Tibial artery (tissue), 4 donors: ENCODE measurements at regions of chr13 and their contacts with region 1.

Region 1: DNA sequence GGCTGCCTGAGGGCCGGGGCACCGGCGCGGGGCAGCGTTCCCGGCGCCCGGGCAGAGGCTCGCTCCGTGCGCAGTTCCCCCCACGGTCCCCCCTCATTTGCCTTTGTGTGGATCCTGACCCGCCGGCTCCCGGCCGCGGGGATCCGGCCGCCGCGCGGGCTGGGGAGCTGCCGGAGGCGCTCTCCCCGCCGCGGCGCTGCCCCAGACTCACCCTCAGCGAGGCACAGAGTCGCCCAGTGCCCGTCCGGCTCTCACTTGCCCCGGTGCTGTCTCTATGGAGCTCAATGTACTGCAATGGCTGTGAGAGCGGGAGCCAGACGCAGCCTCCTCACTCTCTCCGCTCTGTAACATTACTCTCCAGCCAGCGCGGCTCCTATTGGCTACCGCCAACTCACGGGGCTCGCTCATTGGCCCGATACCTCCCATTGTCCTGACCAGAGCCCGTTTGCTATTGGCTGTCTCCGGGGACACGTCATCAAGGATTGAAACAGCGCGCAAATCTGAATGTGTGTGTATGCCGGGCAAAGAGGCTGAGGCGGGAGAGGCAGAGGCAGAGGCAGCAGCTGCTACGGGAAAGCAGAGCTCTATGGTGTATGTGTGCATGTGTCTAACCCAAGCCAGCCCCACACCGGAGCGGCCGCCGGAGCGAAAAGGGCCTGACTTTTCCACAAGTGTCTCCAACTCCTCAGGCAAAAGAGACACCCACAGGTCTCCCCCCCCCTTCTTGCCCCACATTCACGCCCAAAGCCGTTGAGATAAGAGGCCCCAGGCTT is at the start of gene HMGB1:
- DNase-seq: peak; percentile 99
- H3K4me3 ChIP-seq: peak within 1 kb of the TSS; percentile 66 to 100
- H3K27ac ChIP-seq: peak within 1 kb of the TSS; percentile 96 to 100
- H3K4me1 ChIP-seq: peaks cover 0 to 31% (median 23%) of the 10 kb centered on the region in 4 donors
- H3K27me3 ChIP-seq: no peaks in the 10 kb centered on the region
- CTCF ChIP-seq: peak in 1 of 2 experiments; percentile 23

Region 2: GRCh38 chr13:30132623-30133553 is 332.9 kb before region 1 on chr13:
- intact Hi-C with region 1: loop called (anchors 10 kb)
- DNase-seq: peak; percentile 97 to 99
- H3K4me3 ChIP-seq: no peak overlapping the region
- H3K27ac ChIP-seq: no peak overlapping the region
- H3K4me1 ChIP-seq: peaks cover 0 to 21% (median 11%) of the 10 kb centered on the region in 4 donors
- H3K27me3 ChIP-seq: no peaks in the 10 kb centered on the region
- CTCF ChIP-seq: peak; percentile 90 to 95

Region 3: DNA sequence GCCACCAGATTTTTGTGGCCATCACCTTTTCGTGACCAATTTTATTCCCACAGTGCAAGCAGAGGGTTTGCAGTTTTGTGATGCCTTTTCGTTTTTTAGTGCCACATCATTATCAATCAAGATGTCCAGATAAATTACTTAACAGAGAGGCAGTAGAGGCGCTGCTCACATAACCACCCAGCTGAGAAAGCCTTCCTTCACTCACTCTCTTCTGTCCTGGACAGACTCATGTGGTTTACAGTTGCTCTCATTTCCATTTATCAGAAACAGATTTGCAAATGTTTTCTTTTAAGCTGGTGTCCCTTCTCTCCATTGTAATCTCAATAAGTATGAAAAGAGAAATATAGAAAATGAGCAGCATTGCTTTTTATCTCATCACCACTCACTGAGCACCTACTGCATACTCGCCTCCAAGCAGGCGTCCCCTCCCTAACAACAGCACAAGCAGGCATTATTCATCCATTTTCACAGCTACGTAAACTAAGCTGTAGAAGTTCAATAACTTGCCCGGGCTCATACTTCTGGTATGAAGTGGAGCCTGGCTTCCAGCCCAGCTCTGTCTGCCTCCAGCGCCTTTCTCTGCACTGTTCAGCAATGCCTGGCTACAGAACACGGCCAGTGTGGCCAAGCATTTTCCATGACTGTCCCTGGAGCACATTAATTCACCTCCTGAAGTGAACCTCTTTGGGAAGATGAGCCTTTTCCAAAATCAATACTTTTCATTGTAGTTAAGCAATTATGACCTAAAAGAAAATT is 123.8 kb before region 1 on chr13:
- intact Hi-C with region 1: no loop called
- DNase-seq: peak; percentile 91 to 93
- H3K4me3 ChIP-seq: no peak overlapping the region
- H3K27ac ChIP-seq: peak overlapping the region; percentile 68 to 82
- H3K4me1 ChIP-seq: peaks cover 0 to 45% (median 36%) of the 10 kb centered on the region in 4 donors
- H3K27me3 ChIP-seq: no peaks in the 10 kb centered on the region
- CTCF ChIP-seq: no peak

Region 4: GRCh38 chr13:30408319-30409101 is 57.3 kb before region 1 on chr13:
- intact Hi-C with region 1: loop called (anchors 1 kb)
- DNase-seq: peak; percentile 93 to 98
- H3K4me3 ChIP-seq: peak overlapping the region; percentile 45 to 53
- H3K27ac ChIP-seq: peak overlapping the region; percentile 79 to 95
- H3K4me1 ChIP-seq: peaks cover 0 to 33% (median 16%) of the 10 kb centered on the region in 4 donors
- H3K27me3 ChIP-seq: no peaks in the 10 kb centered on the region
- CTCF ChIP-seq: peak; percentile 73 to 91

Region 5: GRCh38 chr13:30577401-30577852 is 111.7 kb after region 1 on chr13:
- intact Hi-C with region 1: no loop called
- DNase-seq: no peak
- H3K4me3 ChIP-seq: no peak overlapping the region
- H3K27ac ChIP-seq: no peak overlapping the region
- H3K4me1 ChIP-seq: peaks cover 0 to 1% (median under 1%) of the 10 kb centered on the region in 4 donors
- H3K27me3 ChIP-seq: no peaks in the 10 kb centered on the region
- CTCF ChIP-seq: no peak

Region 6: GRCh38 chr13:30617315-30618185 is 151.8 kb after region 1 on chr13 and contains the start of gene USPL1:
- intact Hi-C with region 1: loop called (anchors 2 kb)
- DNase-seq: peak; percentile 96 to 99
- H3K4me3 ChIP-seq: peak within 1 kb of the TSS; percentile 77 to 92
- H3K27ac ChIP-seq: peak within 1 kb of the TSS; percentile 99
- H3K4me1 ChIP-seq: peaks cover 5 to 49% (median 25%) of the 10 kb centered on the region in 4 donors
- H3K27me3 ChIP-seq: no peaks in the 10 kb centered on the region
- CTCF ChIP-seq: peak; percentile 38 to 63

Region 7: DNA sequence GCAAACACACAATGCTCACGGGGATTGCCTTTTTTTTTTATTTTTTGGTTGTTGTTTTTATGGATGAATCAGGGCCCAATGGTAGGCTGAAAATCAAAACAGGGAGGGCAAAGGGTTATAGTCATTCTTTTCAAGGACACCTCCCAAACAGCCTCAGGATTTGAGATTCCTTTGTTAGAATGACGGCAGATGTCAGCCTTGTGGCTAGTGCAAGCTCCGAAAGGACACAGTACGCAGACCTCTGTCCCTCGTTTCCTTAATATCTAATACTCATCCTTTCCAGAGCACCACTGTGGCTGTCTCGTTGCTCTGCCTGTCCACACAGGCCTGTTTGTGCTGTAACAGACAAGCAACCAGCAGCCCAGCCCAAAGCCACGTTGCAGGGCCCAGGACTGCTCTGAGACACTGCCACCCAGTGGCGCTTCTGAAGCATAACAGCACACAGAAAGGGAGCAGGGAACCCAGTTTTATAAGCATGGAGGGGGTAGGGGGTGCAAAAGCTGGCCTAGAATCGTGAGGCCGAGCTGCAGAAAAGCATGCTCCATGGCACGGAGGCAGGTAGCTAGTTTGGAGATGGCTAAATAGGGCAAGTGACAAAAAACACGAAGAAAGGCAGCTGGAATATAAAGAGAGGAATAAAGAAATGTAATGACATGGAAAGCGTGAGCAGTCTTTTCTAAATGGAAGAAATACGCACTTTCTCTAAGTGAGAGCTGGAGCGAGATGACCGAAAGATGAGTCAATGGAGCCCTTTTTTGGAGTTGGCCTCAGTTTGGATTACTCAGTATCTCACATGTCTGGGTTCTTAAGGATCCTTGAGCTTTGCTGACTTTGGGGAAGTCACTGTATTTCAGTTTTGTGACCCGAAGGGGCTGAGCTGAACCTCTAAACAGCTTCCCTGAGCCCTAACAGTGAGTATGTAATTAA is 399.6 kb after region 1 on chr13:
- intact Hi-C with region 1: loop called (anchors 5 kb)
- DNase-seq: peak; percentile 85 to 90
- H3K4me3 ChIP-seq: no peak overlapping the region
- H3K27ac ChIP-seq: peak overlapping the region; percentile 87 to 93
- H3K4me1 ChIP-seq: peaks cover 6 to 63% (median 57%) of the 10 kb centered on the region in 4 donors
- H3K27me3 ChIP-seq: no peaks in the 10 kb centered on the region
- CTCF ChIP-seq: peak; percentile 92 to 94

Region 8: DNA sequence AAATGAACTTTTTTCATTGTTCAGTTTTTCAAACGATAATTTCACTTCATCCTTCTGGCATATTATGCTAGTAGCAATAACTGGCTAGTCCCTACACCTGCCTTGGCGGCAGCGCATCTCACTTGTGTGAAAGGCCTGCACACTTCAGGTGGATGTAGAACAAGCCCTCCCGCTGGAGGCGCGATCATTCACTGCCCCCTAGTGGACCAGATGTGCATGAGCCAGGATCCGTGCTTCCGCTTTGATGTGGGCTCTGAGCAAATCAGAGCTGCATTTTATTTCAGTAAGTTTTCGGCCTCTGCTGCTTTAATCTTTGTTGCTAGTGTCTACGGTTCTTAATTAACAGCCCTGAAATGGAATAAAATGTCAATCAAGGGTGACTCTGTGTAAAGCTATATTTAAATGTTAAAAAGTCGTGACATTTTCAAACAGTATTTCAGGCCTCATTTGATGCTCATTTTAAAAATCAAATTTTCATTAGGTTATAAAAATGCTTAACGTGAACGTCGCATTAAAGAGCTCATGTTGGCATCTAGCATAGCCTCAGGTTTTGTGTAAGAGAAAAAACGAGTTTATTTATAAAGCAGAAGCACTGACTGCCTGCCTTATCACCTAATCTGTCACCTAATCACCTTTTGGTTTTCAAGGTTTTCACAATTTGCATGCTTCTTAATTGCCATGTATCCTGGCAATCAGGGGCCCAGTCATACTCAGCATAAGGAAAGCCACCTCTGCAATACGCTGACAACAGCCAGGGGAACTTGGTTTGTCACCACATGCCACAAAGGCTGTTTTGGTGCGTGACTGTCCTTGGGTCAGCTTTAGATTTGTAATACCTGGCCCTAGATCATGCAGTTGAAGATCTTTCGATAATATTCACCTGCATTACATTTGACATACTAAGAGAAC is 578.9 kb after region 1 on chr13:
- intact Hi-C with region 1: loop called (anchors 10 kb)
- DNase-seq: peak; percentile 71 to 86
- H3K4me3 ChIP-seq: no peak overlapping the region
- H3K27ac ChIP-seq: peak overlapping the region in 1 of 2 donors; percentile 47
- H3K4me1 ChIP-seq: peaks cover 0 to 21% (median 14%) of the 10 kb centered on the region in 4 donors
- H3K27me3 ChIP-seq: peaks cover 0 to 2% of the 10 kb centered on the region in 2 donors
- CTCF ChIP-seq: peak; percentile 93 to 97